Gastrocnemius medialis (tissue), 4 donors: ENCODE measurements at regions of chr12 and their contacts with region 1.

Region 1: GRCh38 chr12:43444940-43445564 is 107.0 kb downstream of the ADAMTS20 start:
- DNase-seq: no peak
- ATAC-seq: no peak
- H3K4me3 ChIP-seq: no peak overlapping the region
- H3K27ac ChIP-seq: no peak overlapping the region
- H3K4me1 ChIP-seq: no peaks in the 10 kb centered on the region
- H3K27me3 ChIP-seq: no peaks in the 10 kb centered on the region
- CTCF ChIP-seq: peak in 3 of 5 experiments; percentile 30 to 60 (median 37)
- POLR2A ChIP-seq: no peak

Region 2: GRCh38 chr12:43352001-43352400 is 93.1 kb before region 1 on chr12:
- in situ Hi-C with region 1: no loop called
- intact Hi-C with region 1: no loop called
- DNase-seq: no peak
- ATAC-seq: no peak
- H3K4me3 ChIP-seq: no peak overlapping the region
- H3K27ac ChIP-seq: no peak overlapping the region
- H3K4me1 ChIP-seq: no peaks in the 10 kb centered on the region
- H3K27me3 ChIP-seq: no peaks in the 10 kb centered on the region
- CTCF ChIP-seq: no peak
- POLR2A ChIP-seq: no peak

Region 3: DNA sequence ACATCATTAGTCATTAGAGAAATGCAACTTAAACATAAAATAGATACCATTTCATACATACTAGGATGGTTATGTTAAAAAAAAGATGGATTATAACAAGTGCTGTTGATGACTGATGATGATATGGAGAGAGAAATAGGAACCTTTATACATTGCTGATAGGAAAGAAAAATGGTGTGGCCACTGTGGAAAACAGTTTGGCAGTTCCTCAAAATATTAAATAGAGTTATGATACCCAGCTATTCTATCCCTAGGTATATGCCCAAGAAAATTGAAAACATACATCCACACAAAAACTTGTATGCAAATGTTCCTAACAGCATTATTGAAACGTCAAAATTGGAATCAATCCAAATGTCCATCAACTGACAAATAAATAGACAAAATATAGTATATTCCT is 63.2 kb before region 1 on chr12:
- in situ Hi-C with region 1: no loop called
- intact Hi-C with region 1: no loop called
- DNase-seq: no peak
- ATAC-seq: no peak
- H3K4me3 ChIP-seq: no peak overlapping the region
- H3K27ac ChIP-seq: no peak overlapping the region
- H3K4me1 ChIP-seq: no peaks in the 10 kb centered on the region
- H3K27me3 ChIP-seq: no peaks in the 10 kb centered on the region
- CTCF ChIP-seq: no peak
- POLR2A ChIP-seq: no peak

Region 4: DNA sequence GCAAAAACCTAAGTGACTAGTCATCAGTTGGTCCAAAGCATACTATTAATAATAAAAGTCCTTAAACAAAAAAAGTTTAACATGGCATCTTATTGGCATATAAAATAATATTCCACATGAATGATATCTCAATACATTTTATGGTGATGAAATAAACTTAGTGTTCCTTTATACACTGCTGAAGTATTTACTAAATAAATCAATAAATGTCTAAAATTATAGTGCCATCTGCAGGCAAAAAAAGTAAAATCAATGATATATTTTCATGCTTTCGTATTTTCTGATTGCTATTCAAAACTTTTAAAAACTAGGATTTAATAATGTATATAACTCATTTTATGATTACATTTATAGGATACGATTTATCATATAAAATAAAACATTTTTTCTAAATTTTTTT is 283.1 kb after region 1 on chr12:
- in situ Hi-C with region 1: no loop called
- intact Hi-C with region 1: loop called (anchors 10 kb)
- DNase-seq: no peak
- ATAC-seq: no peak
- H3K4me3 ChIP-seq: no peak overlapping the region
- H3K27ac ChIP-seq: no peak overlapping the region
- H3K4me1 ChIP-seq: no peaks in the 10 kb centered on the region
- H3K27me3 ChIP-seq: no peaks in the 10 kb centered on the region
- CTCF ChIP-seq: peak in 1 of 5 experiments; percentile 24
- POLR2A ChIP-seq: no peak

Region 5: GRCh38 chr12:43976027-43976426 is 531.0 kb after region 1 on chr12:
- in situ Hi-C with region 1: no loop called
- intact Hi-C with region 1: no loop called
- DNase-seq: no peak
- ATAC-seq: no peak
- H3K4me3 ChIP-seq: no peak overlapping the region
- H3K27ac ChIP-seq: no peak overlapping the region
- H3K4me1 ChIP-seq: no peaks in the 10 kb centered on the region
- H3K27me3 ChIP-seq: no peaks in the 10 kb centered on the region
- CTCF ChIP-seq: no peak
- POLR2A ChIP-seq: no peak